ENCODE measurements at regions of chr5 and their contacts with region 1.

Region 1: DNA sequence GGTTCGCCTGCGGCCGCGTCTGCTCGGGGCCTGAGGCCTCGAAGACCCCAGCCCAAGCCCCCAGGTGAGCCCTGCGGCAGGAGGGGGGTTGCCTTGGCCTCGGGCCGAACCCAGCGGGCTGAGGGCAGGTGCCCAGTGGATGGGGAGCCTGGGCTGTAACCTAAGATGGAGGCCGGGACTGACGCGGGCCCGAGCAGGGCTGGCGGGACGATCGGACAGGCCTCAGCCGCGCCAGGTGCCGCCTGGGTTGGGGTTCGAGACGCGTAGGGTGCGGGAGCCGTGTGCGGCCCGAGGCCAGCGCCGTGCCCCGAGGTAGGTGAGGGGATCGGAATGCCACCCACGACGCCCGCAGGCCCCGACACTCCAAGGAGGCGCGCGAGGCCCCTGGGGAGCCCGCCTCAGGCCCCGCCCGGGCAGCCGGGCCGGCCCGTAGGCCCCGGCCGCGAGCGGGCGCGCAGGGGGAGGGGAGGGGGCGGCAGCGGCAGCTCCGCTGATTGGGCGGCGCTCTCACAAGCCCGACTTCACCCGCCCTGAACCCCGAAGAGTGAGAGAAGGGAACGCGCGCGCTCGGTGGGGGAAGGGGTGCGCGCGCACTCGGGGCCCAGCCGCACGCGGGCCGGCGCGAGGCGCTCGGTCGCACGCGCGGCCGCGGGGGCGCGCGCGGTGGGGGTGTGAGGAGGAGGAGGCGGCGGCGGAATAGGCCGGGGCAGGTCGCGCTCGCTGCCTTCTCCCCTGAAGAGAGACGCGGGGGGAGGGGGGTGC is at the start of gene NSD1:
- DNase-seq: peak; percentile 79 to 94
- H3K4me3 ChIP-seq: peak within 1 kb of the TSS; percentile 74 to 94 (median 80)
- H3K27ac ChIP-seq: peak within 1 kb of the TSS; percentile 98
- H3K4me1 ChIP-seq: peaks cover 14 to 28% (median 21%) of the 10 kb centered on the region in 4 experiments
- H3K27me3 ChIP-seq: no peaks in the 10 kb centered on the region
- CTCF ChIP-seq: no peak
- EP300 ChIP-seq: no peak; a peak in 1 of 3 replicates
- POLR2A ChIP-seq: peak; percentile 79 to 87
- RAD21 ChIP-seq: no peak
- total RNA-seq, gene NSD1: 165 and 168 TPM in 2 replicates

Region 2: GRCh38 chr5:176921714-176922113 is 211.6 kb before region 1 on chr5:
- CTCF ChIA-PET with region 1: no interaction called
- POLR2A ChIA-PET with region 1: no interaction called
- DNase-seq: no peak
- H3K4me3 ChIP-seq: no peak overlapping the region
- H3K27ac ChIP-seq: no peak overlapping the region
- H3K4me1 ChIP-seq: no peaks in the 10 kb centered on the region
- H3K27me3 ChIP-seq: no peaks in the 10 kb centered on the region
- CTCF ChIP-seq: no peak
- EP300 ChIP-seq: no peak
- POLR2A ChIP-seq: no peak
- RAD21 ChIP-seq: no peak

Region 3: GRCh38 chr5:177086924-177087706 is 46.2 kb before region 1 on chr5:
- CTCF ChIA-PET with region 1: no interaction called
- POLR2A ChIA-PET with region 1: interaction called, 22 read pairs
- DNase-seq: peak; percentile 25 to 90
- H3K4me3 ChIP-seq: peak overlapping the region; percentile 61 to 83 (median 70)
- H3K27ac ChIP-seq: peak overlapping the region; percentile 21
- H3K4me1 ChIP-seq: peaks cover 0 to 14% (median 8%) of the 10 kb centered on the region in 4 experiments; a peak in 5 of 7 replicates
- H3K27me3 ChIP-seq: no peaks in the 10 kb centered on the region; a peak in 1 of 7 replicates
- CTCF ChIP-seq: peak in 2 of 3 experiments; percentile 67 to 82; a peak in 3 of 4 replicates
- EP300 ChIP-seq: peak in 1 of 2 experiments; percentile 4; a peak in 1 of 3 replicates
- POLR2A ChIP-seq: peak in 1 of 2 experiments; percentile 66; a peak in 2 of 3 replicates
- RAD21 ChIP-seq: peak in 1 of 2 experiments; percentile 40; a peak in 1 of 4 replicates

Region 4: GRCh38 chr5:177094224-177095087 is 38.8 kb before region 1 on chr5:
- CTCF ChIA-PET with region 1: interaction called, 5 read pairs
- POLR2A ChIA-PET with region 1: interaction called, 23 read pairs
- DNase-seq: no peak
- H3K4me3 ChIP-seq: no peak overlapping the region
- H3K27ac ChIP-seq: no peak overlapping the region
- H3K4me1 ChIP-seq: peaks cover 0 to 11% (median 8%) of the 10 kb centered on the region in 4 experiments; a peak in 4 of 7 replicates
- H3K27me3 ChIP-seq: no peaks in the 10 kb centered on the region
- CTCF ChIP-seq: no peak
- EP300 ChIP-seq: no peak
- POLR2A ChIP-seq: no peak
- RAD21 ChIP-seq: no peak

Region 5: GRCh38 chr5:177146891-177147638 is 13.8 kb after region 1 on chr5:
- CTCF ChIA-PET with region 1: interaction called, 3 read pairs
- POLR2A ChIA-PET with region 1: interaction called, 139 read pairs
- DNase-seq: no peak
- H3K4me3 ChIP-seq: no peak overlapping the region
- H3K27ac ChIP-seq: no peak overlapping the region
- H3K4me1 ChIP-seq: no peaks in the 10 kb centered on the region
- H3K27me3 ChIP-seq: no peaks in the 10 kb centered on the region
- CTCF ChIP-seq: no peak
- EP300 ChIP-seq: no peak
- POLR2A ChIP-seq: no peak
- RAD21 ChIP-seq: no peak

Region 6: GRCh38 chr5:177154003-177154643 is 20.9 kb after region 1 on chr5:
- CTCF ChIA-PET with region 1: no interaction called
- POLR2A ChIA-PET with region 1: interaction called, 139 read pairs
- DNase-seq: no peak
- H3K4me3 ChIP-seq: no peak overlapping the region
- H3K27ac ChIP-seq: no peak overlapping the region
- H3K4me1 ChIP-seq: no peaks in the 10 kb centered on the region
- H3K27me3 ChIP-seq: no peaks in the 10 kb centered on the region
- CTCF ChIP-seq: no peak
- EP300 ChIP-seq: no peak
- POLR2A ChIP-seq: no peak
- RAD21 ChIP-seq: no peak

Region 7: GRCh38 chr5:177176175-177176711 is 43.0 kb after region 1 on chr5:
- CTCF ChIA-PET with region 1: no interaction called
- POLR2A ChIA-PET with region 1: interaction called, 12 read pairs
- DNase-seq: no peak
- H3K4me3 ChIP-seq: no peak overlapping the region
- H3K27ac ChIP-seq: no peak overlapping the region
- H3K4me1 ChIP-seq: no peaks in the 10 kb centered on the region
- H3K27me3 ChIP-seq: no peaks in the 10 kb centered on the region
- CTCF ChIP-seq: no peak
- EP300 ChIP-seq: no peak
- POLR2A ChIP-seq: no peak
- RAD21 ChIP-seq: no peak

Region 8: DNA sequence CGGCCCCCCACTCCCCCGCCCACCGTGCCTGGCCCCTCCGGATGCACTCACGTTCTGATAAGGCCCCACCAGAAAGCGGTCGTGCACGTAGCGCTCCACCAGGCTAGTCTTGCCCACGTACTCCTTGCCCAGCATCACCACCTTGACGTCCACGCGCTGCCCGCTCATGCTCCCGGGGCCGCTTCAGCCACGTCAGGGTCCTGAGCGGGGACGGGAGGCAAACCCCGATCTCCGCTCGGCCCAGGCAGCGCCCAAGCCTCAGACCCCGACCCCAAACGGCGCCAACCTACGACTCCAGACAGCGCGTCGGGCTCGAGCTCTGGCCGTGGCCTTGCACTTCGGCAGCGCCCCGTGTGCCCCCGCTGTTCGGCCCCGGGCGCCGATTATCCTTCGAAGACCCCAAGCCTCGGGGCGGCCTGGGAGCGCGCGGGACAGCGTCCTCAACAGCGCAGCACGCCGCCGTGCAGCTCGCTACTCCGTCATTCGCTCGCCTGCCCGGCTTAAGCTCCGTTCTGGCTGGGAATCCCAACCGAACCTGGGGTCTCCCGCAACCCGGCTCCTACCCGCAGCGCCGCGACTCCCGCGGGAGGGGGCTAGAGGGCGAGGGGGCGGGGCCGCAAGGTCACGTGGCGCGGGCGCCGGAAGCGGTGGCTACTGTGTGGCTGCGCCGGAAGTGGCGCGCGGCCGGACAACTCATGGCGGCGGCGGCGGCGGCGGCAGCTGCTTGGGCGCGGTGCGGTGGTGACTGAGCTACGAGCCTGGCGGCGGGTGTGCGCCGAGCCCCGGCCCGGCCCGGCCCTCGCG is 170.1 kb after region 1 on chr5 and contains the starts of genes PRELID1 and RAB24:
- CTCF ChIA-PET with region 1: interaction called, 4 read pairs
- POLR2A ChIA-PET with region 1: interaction called, 111 read pairs
- DNase-seq: peak in 1 of 2 experiments; percentile 97
- H3K4me3 ChIP-seq: peak within 1 kb of the TSS; percentile 91 to 99 (median 94)
- H3K27ac ChIP-seq: peak within 1 kb of the TSS; percentile 69
- H3K4me1 ChIP-seq: peaks cover 0 to 20% (median 5%) of the 10 kb centered on the region in 4 experiments; a peak in 5 of 7 replicates
- H3K27me3 ChIP-seq: no peaks in the 10 kb centered on the region
- CTCF ChIP-seq: peak in 2 of 3 experiments; percentile 1 to 16; a peak in 1 of 4 replicates
- EP300 ChIP-seq: no peak
- POLR2A ChIP-seq: peak in 1 of 2 experiments; percentile 50; a peak in 1 of 3 replicates
- RAD21 ChIP-seq: no peak
- total RNA-seq, gene PRELID1: 272 and 279 TPM in 2 replicates
- total RNA-seq, gene RAB24: 18.8 and 20.5 TPM in 2 replicates

Region 9: DNA sequence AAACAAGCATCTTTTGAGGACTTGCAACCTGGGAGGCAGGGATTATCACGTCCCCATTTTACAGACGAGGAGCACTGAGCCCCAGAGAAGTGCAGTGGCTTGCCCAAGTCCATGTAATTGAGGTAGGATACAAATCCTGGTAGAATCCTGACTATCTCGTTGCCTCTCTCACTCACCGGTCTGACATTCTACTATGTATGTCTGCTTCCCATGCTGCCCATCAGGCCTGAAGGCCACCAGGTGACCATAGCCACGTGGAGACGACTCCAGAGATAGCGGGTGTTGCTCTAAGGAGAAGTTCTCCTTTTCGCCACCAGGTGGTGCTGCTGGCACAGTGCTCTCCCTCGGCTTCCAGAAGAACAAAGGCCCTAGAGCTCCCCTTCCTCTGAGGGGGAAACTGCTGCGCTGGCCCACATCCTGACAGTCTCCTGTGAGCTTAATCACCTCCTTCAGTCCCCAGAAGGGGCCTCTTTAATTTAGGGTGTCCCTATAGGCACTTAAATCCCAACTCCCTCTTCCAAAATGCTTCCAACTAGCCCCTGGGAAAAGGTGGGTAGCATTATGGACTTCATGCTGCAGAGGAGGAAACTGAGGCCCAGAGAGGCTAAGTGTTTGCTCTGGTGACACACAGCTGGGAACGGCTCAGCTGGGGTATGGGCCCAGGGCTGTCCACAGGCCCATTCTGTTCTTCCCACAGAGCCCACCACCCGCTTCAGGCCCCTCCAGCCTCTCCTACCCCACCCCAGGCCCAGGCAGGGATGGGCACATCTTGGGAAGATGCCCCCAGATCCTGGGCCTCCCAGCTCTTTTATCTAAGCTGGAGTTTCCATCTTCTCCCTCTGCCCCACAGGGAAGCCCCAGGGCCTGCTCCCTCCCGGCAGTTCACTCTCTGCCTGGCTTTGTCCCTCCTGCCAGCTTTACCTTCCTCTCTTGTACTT is 257.4 kb after region 1 on chr5:
- CTCF ChIA-PET with region 1: no interaction called
- POLR2A ChIA-PET with region 1: no interaction called
- DNase-seq: peak; percentile 89 to 95
- H3K4me3 ChIP-seq: no peak overlapping the region
- H3K27ac ChIP-seq: no peak overlapping the region
- H3K4me1 ChIP-seq: peaks cover 0 to 3% (median 0%) of the 10 kb centered on the region in 4 experiments; a peak in 4 of 7 replicates
- H3K27me3 ChIP-seq: peaks cover 0 to 17% (median 10%) of the 10 kb centered on the region in 4 experiments; a peak in 6 of 7 replicates
- CTCF ChIP-seq: peak in 2 of 3 experiments; percentile 97; a peak in 3 of 4 replicates
- EP300 ChIP-seq: no peak
- POLR2A ChIP-seq: no peak
- RAD21 ChIP-seq: peak; percentile 93 to 97